Left cardiac atrium (tissue), 4 donors: ENCODE measurements at regions of chr19 and their contacts with region 1.

Region 1: DNA sequence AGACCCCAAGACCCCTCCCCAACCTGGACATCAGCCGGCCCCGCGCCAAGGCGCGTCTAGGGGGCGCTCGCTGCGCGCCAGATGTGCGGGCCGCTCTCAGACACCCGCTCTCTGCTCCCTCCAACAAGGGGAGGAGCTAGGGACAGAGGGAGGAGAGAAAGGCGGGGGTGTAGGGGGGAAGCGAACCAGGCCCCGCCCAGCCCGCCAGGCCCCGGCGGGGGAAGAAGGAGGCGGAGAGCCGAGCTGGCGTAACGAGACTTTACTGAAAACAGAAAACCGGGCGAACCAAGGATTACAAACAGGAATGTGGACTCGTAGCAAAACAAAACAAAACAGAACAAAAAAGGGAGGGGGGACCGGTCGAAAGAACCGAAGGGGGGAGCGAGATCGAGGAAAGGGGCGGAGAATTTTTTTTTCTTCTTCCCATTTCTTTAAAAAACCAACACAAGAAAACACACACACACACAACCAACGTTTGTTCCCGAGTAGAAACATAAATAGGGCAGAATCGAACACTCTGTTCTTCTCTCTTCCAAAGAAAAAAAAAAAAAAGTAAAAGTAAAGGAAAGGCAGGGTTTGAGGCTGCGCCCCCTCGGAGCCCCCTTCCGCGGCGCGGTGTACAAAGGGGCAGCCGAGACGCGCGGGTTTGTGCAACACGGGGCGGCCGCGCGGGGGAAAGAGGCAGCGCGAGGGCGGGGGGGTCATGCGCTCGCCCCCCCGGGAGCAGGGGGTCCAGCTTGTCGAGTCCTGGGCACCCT is 1.7 kb downstream of the JUND start:
- DNase-seq: peak; percentile 92
- ATAC-seq: peak; percentile 65 to 71

Region 2: GRCh38 chr19:18192673-18193387 is 86.9 kb before region 1 on chr19 and contains the start of gene MPV17L2:
- intact Hi-C with region 1: no loop called
- DNase-seq: peak; percentile 100
- ATAC-seq: peak; percentile 95 to 96
- total RNA-seq, gene MPV17L2: 8.7 to 13.4 TPM

Region 3: DNA sequence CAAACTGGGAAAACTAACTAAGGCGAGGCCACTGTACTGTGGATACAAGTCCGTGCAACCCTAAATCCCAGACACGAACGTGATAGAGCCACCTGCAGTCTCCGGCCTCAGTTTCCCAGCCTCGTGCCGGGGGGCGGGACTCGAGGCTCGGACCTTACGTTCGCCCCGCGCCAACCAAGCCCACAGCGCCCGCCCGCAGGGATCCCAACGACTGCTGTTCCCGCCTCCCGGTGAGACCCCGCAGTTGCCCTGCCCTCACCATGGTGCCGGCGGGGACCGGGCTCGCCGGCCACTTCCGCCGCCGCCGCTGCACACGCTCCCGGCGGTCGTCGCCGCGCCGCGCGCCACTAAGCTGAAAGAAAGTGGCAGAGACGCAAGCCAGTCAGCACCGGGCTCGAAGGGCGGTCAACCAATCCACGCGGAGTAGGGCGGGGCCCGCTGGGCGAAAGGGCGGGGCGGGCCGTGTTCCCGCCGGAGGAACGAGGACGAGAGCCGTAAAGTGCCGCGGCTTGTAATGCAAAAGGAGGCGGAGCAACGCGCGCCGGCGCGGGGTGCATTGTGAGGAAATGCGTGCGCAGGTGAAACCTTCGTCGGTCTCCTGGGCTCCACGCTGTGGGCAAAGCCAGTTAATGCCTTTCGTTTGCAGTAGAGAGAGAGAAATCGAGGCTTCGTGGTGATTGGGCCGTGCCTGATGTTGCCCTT is 43.2 kb after region 1 on chr19 and contains the start of gene LSM4:
- intact Hi-C with region 1: loop called (anchors 1 to 2 kb)
- DNase-seq: peak; percentile 98
- ATAC-seq: peak; percentile 98
- total RNA-seq, gene LSM4: 68.9 to 79.0 TPM

Region 4: DNA sequence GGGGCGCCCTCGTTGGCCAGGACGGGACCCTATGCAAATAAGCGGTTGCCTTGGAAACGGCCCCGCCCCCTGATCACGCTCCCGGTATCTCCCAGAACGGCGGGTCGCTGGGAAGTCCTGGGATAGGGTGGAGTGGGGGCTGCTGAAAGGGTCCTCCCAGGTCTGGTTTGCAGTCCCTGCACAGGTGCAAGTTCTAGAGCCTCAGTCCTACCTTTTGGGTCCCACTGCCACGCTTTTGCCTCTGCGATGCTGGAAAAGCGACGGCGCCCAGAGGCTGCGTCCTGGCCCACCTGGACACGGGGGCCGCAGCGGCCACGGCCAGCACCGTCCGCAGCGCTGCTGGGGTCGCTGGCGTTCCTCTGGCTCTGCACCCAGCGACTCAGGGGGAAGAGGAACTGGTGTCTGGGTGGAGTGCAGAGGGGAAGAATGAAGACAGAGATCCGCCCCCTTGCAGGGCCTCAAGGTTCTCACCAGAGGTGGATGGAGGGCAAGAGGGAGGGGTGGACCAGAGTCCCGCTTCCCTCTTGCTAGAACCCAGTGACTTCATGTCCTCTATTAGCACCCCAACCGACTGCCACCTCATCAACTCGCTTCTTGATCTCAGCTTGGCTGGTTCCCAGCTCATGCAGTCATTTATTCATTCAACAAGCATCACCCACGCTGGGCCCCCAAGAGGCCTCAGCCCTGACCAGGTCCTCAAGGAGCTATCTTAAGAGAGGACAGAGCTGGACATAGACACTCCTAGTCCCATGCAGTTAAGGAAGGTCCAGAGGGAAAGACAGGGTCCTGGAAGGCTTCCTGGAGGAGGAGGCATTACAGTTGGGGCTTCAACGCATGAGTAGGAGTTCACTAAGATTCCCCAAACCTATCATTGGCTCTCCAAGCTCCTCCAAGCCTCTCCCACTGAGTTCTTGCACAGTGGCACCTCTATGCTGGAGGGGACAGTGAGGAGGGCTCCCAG is 117.8 kb after region 1 on chr19 and contains the start of gene LRRC25:
- intact Hi-C with region 1: loop called in 1 of 2 experiments (anchors 10 kb)
- DNase-seq: peak; percentile 60
- ATAC-seq: peak; percentile 60 to 73
- total RNA-seq, gene LRRC25: 4.9 to 8.7 TPM